Mammary epithelial cell (primary cell): ENCODE measurements at regions of chr12 and their contacts with region 1.

Region 1: GRCh38 chr12:124829008-124829707 is 34.5 kb downstream of the SCARB1 start:
- DNase-seq: peak; percentile 87
- H3K4me3 ChIP-seq: no peak overlapping the region
- H3K27ac ChIP-seq: peak overlapping the region; percentile 69
- H3K4me1 ChIP-seq: peaks cover 27% of the 10 kb centered on the region
- H3K27me3 ChIP-seq: no peaks in the 10 kb centered on the region
- CTCF ChIP-seq: peak in 1 of 2 donors; percentile 1

Region 2: DNA sequence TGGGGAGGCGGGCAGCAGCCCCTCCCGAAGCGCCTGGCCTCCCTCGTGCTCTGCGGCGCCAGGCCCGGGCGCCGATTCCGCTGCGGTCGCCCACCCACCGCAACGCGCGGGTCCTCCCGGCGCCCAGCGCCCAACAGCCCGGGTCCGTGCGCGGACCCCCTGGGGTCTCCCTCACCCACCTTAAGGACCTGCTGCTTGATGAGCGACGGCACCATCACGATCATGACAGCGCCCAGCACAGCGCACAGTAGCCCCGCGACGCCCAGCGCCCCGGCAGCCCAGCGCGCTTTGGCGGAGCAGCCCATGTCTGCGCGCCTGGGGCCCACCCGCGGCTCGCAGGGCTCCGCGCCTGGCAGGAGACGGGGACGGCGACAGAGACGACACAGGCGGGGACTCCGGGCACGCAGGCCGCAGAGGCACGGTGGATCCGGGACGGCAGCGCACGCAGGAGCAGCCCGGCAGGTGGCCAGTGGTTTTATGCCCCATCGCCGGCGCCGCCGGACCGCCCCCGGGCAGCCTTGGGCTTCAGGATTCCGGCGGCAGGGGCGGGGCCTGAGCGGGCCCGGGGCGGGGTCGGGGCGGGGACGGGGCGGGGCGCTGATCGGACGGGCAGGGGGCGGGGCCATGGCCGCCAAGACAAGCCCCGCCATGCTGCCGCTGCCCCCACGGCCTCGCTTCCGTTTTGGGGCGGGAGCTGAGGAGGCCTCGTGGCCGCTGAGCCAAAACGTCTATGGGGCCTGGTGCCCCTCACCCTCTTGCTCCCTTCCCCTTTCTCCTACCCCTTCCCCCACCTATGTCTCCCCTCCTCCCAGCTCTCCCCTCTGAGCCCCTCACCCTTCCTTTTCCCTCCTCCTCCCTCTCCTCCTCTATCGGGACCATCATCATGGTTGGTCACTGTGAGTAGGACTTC is 34.5 kb after region 1 on chr12 and contains the start of gene SCARB1:
- CTCF ChIA-PET with region 1: no interaction called
- dilution Hi-C with region 1: no loop called
- in situ Hi-C with region 1: no loop called
- intact Hi-C with region 1: loop called (anchors 2 kb)
- DNase-seq: peak; percentile 72
- H3K4me3 ChIP-seq: peak within 1 kb of the TSS; percentile 74 to 91 (median 78)
- H3K27ac ChIP-seq: peak within 1 kb of the TSS; percentile 36
- H3K4me1 ChIP-seq: peaks cover 20% of the 10 kb centered on the region
- H3K27me3 ChIP-seq: no peaks in the 10 kb centered on the region
- CTCF ChIP-seq: no peak
- total RNA-seq, gene SCARB1: 44.8 to 60.9 TPM

Region 3: DNA sequence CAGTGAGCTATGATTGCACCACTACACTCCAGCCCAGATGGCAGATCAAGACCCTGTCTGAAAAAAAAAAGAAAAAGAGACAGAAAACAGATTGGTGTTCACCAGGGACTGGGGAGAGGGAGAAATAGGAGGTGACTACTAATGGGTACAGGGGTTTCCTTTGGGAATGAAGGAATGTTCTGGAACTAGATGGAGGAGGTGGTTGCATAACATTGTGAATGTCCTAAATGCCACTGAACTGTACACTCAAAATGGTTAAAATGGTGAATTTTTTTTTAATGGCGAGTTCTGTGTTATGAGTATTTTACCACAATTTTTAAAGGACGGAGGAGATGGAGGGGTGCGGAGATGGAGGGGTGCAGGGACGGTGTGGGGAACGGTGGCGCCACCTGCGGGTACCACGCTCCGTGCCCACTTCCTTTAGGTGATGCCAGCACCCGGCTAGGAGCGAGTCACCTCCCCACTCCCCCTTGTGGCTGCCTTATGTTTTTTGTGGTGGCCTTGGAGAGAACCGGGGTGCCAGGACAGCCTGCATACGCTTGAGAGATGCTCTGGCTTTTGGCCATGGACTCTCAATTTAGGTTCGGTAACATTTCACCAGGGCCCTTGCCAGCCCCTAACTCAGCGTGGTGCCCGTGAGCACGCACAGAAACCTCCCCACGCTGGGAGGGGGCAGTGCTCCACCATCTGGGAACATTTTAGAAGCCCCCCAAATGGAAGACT is 69.2 kb after region 1 on chr12:
- CTCF ChIA-PET with region 1: no interaction called
- dilution Hi-C with region 1: no loop called
- in situ Hi-C with region 1: no loop called
- intact Hi-C with region 1: loop called (anchors 1 kb)
- DNase-seq: peak; percentile 45
- H3K4me3 ChIP-seq: no peak overlapping the region
- H3K27ac ChIP-seq: no peak overlapping the region
- H3K4me1 ChIP-seq: peaks cover 5% of the 10 kb centered on the region
- H3K27me3 ChIP-seq: no peaks in the 10 kb centered on the region
- CTCF ChIP-seq: peak; percentile 51 to 61

Region 4: GRCh38 chr12:125015680-125016310 is 186.6 kb after region 1 on chr12:
- CTCF ChIA-PET with region 1: no interaction called
- dilution Hi-C with region 1: no loop called
- in situ Hi-C with region 1: no loop called
- intact Hi-C with region 1: no loop called
- DNase-seq: no peak
- H3K4me3 ChIP-seq: no peak overlapping the region
- H3K27ac ChIP-seq: no peak overlapping the region
- H3K4me1 ChIP-seq: no peaks in the 10 kb centered on the region
- H3K27me3 ChIP-seq: no peaks in the 10 kb centered on the region
- CTCF ChIP-seq: no peak